Posterior vena cava (tissue), 2 donors: ENCODE measurements at regions of chr3 and their contacts with region 1.

Region 1: DNA sequence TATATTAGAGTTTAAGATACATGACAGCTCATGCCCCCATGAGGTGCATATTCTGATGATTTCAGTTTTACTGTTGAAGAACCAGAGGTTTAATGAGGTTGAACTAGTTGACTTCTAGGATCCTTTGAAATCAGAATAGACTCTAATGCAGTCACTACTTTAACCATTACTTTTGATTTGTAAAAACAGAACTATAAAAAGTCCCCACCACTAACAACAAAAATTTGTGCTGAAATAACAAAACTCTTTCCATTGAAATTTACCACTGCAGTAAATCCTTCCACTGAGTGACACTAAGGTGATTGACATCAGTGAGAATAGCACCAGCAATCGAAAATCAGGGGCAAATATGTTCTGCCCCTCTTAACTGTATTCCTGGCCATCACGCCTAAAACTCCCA is 214.1 kb downstream of the SHQ1 start:
- DNase-seq: no peak

Region 2: DNA sequence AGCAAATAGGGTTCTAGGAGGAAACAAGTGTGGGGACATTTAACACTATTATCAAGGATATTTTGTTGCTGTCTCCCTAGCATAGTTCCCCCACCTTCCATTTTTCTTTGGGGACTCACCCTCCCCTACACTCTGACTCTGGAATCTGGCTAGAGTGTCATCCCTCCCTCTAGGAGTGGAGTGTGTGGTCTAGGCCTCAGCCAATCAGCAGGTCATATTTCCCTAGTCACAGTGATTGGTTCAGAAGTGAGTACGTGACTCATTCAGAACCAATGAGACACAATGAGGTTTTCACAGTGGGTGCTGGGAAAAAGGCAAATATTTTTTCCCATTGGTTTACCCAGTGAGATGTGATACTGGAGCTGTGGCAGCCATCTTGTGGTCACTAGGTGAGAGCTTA is 20.3 kb before region 1 on chr3:
- intact Hi-C with region 1: loop called in 1 of 2 experiments (anchors 1 kb)
- DNase-seq: no peak

Region 3: DNA sequence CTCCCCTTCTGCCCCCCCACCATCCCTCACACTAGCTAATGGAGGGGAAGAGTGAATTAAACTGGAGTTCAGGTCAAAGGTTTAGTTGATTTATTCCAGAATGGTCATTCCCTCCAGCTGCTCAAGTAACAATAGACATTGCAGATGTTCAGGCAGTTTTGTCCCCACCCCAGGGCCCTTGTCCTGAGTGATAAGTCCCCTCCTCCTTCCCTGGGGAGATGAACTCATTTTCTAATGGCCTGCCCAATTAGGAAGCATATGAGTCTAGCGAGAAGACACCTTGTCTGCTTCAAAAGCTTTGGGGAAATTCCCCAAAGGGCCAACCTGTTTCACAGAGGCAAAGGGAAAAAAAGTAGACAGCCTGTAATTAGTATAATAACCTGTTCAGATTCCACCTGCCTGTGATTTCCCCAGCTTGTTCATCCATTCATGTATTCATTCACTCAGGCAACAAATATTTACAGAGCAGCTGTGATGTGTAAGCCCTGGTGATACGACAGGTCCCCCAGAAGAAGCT is 48.9 kb after region 1 on chr3:
- intact Hi-C with region 1: loop called in 1 of 2 experiments (anchors 1 kb)
- DNase-seq: no peak

Region 4: DNA sequence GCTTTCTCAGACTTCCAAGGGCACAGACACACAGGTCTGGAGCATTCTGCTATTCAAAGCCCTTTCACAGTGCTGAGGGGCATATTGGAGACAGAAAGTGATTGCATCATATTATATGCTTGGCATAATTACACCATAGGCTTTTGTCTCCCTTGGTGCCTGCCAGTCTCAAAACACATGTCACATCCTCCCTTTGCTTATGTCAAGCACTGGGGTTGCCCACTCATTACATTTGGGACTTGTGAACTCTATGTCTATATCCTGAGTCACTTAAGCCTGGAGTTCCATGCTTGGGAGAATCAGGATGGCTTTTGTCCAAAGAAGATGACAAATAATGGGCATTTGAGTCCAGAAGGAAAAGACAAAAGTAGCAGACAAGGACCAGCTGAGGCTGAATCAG is 1002.9 kb after region 1 on chr3:
- intact Hi-C with region 1: no loop called
- DNase-seq: no peak